ENCODE measurements at regions of chr1 and their contacts with region 1.

Region 1: DNA sequence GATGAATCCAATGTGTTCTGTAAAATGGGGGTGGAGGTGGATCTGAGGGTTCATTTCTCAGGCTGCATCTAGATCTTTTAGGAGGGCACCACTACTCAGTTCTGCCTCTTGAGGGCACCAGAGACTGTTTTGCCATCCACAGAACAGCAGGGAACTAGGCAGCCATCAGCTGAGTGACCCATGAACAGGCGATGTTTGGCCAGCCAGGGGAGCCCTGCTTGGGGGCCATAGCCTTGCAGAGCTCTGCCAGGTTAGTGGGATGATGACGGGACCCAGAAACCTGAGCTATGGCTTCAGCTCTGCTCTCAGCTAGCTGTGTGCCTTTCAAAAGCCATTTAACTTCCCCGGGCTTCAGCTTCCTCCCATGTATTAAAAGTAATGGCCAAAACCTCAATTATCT is 13.4 kb upstream of the NOS1AP start:
- DNase-seq: peak; percentile 69
- H3K4me3 ChIP-seq: peak overlapping the region in 1 of 2 experiments; percentile 33; a peak in 1 of 4 replicates
- H3K27ac ChIP-seq: no peak overlapping the region
- H3K4me1 ChIP-seq: peaks cover 0 to 10% of the 10 kb centered on the region in 2 experiments; a peak in 1 of 4 replicates
- H3K27me3 ChIP-seq: no peaks in the 10 kb centered on the region; the same call in 1 of the 2 replicates
- CTCF ChIP-seq: peak; percentile 90
- EP300 ChIP-seq: no peak
- RAD21 ChIP-seq: peak; percentile 99

Region 2: GRCh38 chr1:162117039-162117774 is 61.2 kb after region 1 on chr1:
- CTCF ChIA-PET with region 1: interaction called, 10 read pairs
- POLR2A ChIA-PET with region 1: no interaction called
- DNase-seq: peak; percentile 44
- H3K4me3 ChIP-seq: no peak overlapping the region
- H3K27ac ChIP-seq: peak overlapping the region in 1 of 2 experiments; percentile 97; a peak in 2 of 4 replicates
- H3K4me1 ChIP-seq: peaks cover 0 to 21% of the 10 kb centered on the region in 2 experiments; a peak in 2 of 4 replicates
- H3K27me3 ChIP-seq: no peaks in the 10 kb centered on the region; the same call in 1 of the 2 replicates
- CTCF ChIP-seq: no peak
- EP300 ChIP-seq: peak in 1 of 2 experiments; percentile 72; a peak in 2 of 4 replicates
- RAD21 ChIP-seq: peak; percentile 25; the same call in 1 of the 2 replicates

Region 3: GRCh38 chr1:162276493-162276892 is 220.4 kb after region 1 on chr1:
- CTCF ChIA-PET with region 1: interaction called, 44 read pairs
- POLR2A ChIA-PET with region 1: no interaction called
- DNase-seq: peak; percentile 51
- H3K4me3 ChIP-seq: peak overlapping the region in 1 of 2 experiments; percentile 18; a peak in 1 of 4 replicates
- H3K27ac ChIP-seq: no peak overlapping the region
- H3K4me1 ChIP-seq: peaks cover 0 to 5% of the 10 kb centered on the region in 2 experiments; a peak in 2 of 4 replicates
- H3K27me3 ChIP-seq: peaks cover 10% of the 10 kb centered on the region; the same call in 1 of the 2 replicates
- CTCF ChIP-seq: peak; percentile 57
- EP300 ChIP-seq: no peak
- RAD21 ChIP-seq: peak; percentile 84

Region 4: DNA sequence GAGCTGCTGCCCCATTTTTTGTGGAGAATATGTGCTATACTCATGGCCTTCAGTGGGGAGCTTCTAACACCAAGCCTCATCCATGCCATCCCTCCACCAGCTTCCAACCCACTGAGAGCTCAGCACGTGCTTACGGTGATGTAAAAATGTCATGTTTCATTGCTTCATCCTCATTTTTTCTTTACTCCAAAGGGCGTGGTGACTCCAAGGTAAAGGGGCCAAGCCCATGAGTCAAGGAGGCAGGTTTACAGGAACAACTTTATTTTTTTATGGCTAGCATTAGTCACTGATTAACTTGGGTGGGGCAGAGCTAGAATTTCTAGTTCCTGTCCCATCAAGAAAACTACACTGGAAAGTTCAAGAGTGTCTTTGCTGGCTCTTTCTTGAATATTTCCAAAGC is 325.3 kb after region 1 on chr1 and contains the start of gene C1orf226:
- CTCF ChIA-PET with region 1: interaction called, 12 read pairs
- POLR2A ChIA-PET with region 1: no interaction called
- DNase-seq: no peak
- H3K4me3 ChIP-seq: no peak within 1 kb of the TSS
- H3K27ac ChIP-seq: no peak within 1 kb of the TSS
- H3K4me1 ChIP-seq: no peaks in the 10 kb centered on the region
- H3K27me3 ChIP-seq: peaks cover 5% of the 10 kb centered on the region; the same call in 1 of the 2 replicates
- CTCF ChIP-seq: no peak
- EP300 ChIP-seq: no peak
- RAD21 ChIP-seq: no peak
- polyA plus RNA-seq, gene C1orf226: 0.03 and 0.05 TPM in 2 replicates